ENCODE measurements at regions of chr12 and their contacts with region 1.

Region 1: GRCh38 chr12:49296034-49296835 is 1.3 kb downstream of the PRPH start:
- DNase-seq: peak in 1 of 2 experiments; percentile 54
- H3K4me3 ChIP-seq: no peak overlapping the region
- H3K27ac ChIP-seq: no peak overlapping the region
- H3K4me1 ChIP-seq: no peaks in the 10 kb centered on the region
- H3K27me3 ChIP-seq: 0 out of 2 replicates have a peak, but pooled peaks cover 2% of the 10 kb centered on the region
- CTCF ChIP-seq: peak; percentile 78

Region 2: GRCh38 chr12:48651681-48652080 is 644.6 kb before region 1 on chr12:
- CTCF ChIA-PET with region 1: no interaction called
- POLR2A ChIA-PET with region 1: no interaction called
- intact Hi-C with region 1: no loop called
- DNase-seq: no peak
- H3K4me3 ChIP-seq: no peak overlapping the region
- H3K27ac ChIP-seq: no peak overlapping the region
- H3K4me1 ChIP-seq: no peaks in the 10 kb centered on the region
- H3K27me3 ChIP-seq: no peaks in the 10 kb centered on the region
- CTCF ChIP-seq: no peak

Region 3: DNA sequence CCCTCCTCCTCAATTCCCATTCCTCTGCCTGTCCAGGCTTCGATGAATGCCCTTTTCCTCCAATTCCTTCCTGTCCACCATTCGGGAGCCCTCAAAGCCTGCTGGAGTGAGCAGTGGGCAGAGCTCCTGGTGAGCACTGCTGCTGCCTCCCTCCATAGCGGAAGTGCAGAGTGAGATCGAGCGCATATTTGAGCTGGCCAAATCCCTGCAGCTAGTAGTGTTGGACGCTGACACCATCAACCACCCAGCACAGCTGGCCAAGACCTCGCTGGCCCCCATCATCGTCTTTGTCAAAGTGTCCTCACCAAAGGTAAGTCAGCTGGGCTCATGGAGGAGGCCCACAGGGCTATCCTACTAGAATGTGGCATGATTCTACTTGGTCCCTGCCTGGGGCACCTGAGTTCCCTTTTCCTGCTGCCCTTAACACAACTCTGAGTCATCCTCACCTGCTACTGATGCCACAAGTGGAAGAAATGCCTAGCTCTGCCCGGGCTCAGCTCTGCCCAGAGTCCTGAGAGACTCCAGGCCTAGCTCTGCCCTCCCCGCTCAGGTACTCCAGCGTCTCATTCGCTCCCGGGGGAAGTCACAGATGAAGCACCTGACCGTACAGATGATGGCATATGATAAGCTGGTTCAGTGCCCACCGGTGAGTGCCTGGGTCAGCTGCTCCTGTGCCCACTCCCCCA is 469.9 kb before region 1 on chr12:
- CTCF ChIA-PET with region 1: interaction called, 10 read pairs
- POLR2A ChIA-PET with region 1: no interaction called
- intact Hi-C with region 1: no loop called
- DNase-seq: peak in 1 of 2 experiments; percentile 64
- H3K4me3 ChIP-seq: no peak overlapping the region
- H3K27ac ChIP-seq: no peak overlapping the region
- H3K4me1 ChIP-seq: no peaks in the 10 kb centered on the region
- H3K27me3 ChIP-seq: no peaks in the 10 kb centered on the region
- CTCF ChIP-seq: no peak

Region 4: GRCh38 chr12:49130151-49131050 is 165.8 kb before region 1 on chr12:
- CTCF ChIA-PET with region 1: no interaction called
- POLR2A ChIA-PET with region 1: interaction called, 14 read pairs
- intact Hi-C with region 1: no loop called
- DNase-seq: peak; percentile 83 to 89
- H3K4me3 ChIP-seq: peak overlapping the region; percentile 84
- H3K27ac ChIP-seq: peak overlapping the region; percentile 94
- H3K4me1 ChIP-seq: peaks cover 26% of the 10 kb centered on the region
- H3K27me3 ChIP-seq: no peaks in the 10 kb centered on the region
- CTCF ChIP-seq: peak; percentile 82

Region 5: GRCh38 chr12:49322708-49323523 is 26.7 kb after region 1 on chr12 and contains the start of gene TROAP:
- CTCF ChIA-PET with region 1: interaction called, 11 read pairs
- POLR2A ChIA-PET with region 1: interaction called, 4 read pairs
- intact Hi-C with region 1: no loop called
- DNase-seq: peak; percentile 93 to 98
- H3K4me3 ChIP-seq: peak within 1 kb of the TSS; percentile 68
- H3K27ac ChIP-seq: 0 out of 2 replicates have a peak within 1 kb of the TSS, but pooled peaks have one; percentile 6
- H3K4me1 ChIP-seq: peaks cover 9% of the 10 kb centered on the region; the same call in 1 of the 2 replicates
- H3K27me3 ChIP-seq: no peaks in the 10 kb centered on the region
- CTCF ChIP-seq: no peak
- total RNA-seq, gene TROAP: 79.4 and 79.9 TPM in 2 replicates

Region 6: DNA sequence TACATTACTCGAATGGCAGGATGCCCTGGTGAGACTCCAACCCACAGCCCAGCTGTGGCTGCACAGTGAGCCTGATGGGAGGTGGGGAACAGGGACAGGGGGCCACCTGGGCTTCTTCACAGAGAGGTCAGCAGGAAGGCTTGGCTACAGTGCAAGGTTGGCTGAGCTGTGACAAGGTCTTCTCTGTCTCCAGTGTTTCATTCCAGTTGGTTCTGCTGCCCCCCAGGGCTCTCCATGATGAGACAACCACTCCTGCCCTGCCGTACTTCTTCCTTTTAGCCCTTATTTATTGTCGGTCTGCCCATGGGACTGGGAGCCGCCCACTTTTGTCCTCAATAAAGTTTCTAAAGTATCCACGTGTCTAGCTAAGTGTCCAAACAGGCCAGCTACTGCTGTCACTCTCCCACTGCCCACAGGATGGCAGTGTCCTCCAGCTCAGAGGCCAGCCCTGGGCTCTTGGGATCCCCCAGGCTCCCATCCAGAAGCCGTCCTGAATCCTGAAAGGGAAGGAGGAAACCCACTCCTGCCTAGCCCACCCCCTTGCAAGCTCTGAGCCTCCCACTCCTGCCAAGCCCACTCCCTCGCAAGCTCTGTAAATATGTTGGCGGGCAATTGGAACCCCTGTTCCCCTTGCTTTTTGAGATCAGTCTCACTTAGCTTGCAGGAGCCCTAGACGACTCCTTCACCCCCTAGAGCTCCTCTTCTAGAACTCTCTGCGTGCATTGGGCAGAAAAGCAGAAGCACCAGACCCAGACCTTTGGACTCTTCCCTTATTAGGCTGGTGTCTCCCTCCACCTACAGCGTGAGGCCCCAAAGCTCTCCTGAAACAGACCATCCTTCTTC is 35.4 kb after region 1 on chr12:
- CTCF ChIA-PET with region 1: interaction called, 14 read pairs
- POLR2A ChIA-PET with region 1: no interaction called
- intact Hi-C with region 1: no loop called
- DNase-seq: peak in 1 of 2 experiments; percentile 47
- H3K4me3 ChIP-seq: no peak overlapping the region
- H3K27ac ChIP-seq: no peak overlapping the region
- H3K4me1 ChIP-seq: no peaks in the 10 kb centered on the region
- H3K27me3 ChIP-seq: no peaks in the 10 kb centered on the region
- CTCF ChIP-seq: peak; percentile 76

Region 7: GRCh38 chr12:49347384-49348237 is 51.4 kb after region 1 on chr12:
- CTCF ChIA-PET with region 1: interaction called, 16 read pairs
- POLR2A ChIA-PET with region 1: interaction called, 5 read pairs
- intact Hi-C with region 1: no loop called
- DNase-seq: peak in 1 of 2 experiments; percentile 88
- H3K4me3 ChIP-seq: peak overlapping the region; percentile 62
- H3K27ac ChIP-seq: no peak overlapping the region
- H3K4me1 ChIP-seq: peaks cover 28% of the 10 kb centered on the region
- H3K27me3 ChIP-seq: peaks cover 37% of the 10 kb centered on the region
- CTCF ChIP-seq: peak; percentile 98

Region 8: DNA sequence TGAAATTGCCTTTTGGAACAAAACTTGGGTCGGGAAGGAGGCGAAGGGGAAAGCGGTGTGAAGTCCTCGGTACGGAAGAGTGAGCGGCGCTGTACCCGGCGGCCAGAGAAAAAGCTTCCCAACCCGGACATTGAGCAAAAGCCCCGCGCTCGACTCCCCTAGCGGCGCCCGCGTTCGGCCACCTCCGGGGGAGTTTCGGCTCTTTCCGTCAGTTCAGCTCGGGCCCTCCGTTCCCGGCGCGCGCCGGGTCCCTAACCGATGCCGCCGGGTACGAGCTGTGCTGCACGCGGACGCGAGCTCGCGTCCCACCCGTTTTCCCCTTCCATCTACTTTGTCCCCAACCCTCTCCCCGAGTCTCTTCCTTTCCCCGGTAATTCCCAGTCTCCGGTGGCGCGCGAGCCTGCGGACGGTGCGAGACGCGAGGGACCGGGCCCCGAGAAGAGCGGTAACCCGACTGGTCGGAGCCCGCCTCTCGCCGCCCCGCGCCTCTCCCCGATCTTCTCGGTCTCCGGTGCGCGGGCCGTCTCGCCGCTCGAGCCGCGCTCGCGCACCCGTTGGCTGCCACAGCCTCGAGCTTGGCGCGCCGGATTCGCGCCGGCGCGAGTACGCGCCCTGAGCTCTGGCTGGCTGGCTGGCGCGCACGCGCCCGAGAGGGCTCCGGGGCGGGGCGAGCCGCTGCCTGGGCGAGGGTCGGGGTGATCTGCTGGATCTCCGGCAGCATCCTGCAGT is 70.6 kb after region 1 on chr12:
- CTCF ChIA-PET with region 1: no interaction called
- POLR2A ChIA-PET with region 1: no interaction called
- intact Hi-C with region 1: no loop called
- DNase-seq: peak; percentile 81 to 98
- H3K4me3 ChIP-seq: peak overlapping the region; percentile 93
- H3K27ac ChIP-seq: peak overlapping the region; percentile 73
- H3K4me1 ChIP-seq: peaks cover 36% of the 10 kb centered on the region
- H3K27me3 ChIP-seq: no peaks in the 10 kb centered on the region
- CTCF ChIP-seq: no peak; the same call in 1 of the 2 replicates

Measured in PC-9 (cell line).